ENCODE measurements at regions of chr3 and their contacts with region 1.

Region 1: DNA sequence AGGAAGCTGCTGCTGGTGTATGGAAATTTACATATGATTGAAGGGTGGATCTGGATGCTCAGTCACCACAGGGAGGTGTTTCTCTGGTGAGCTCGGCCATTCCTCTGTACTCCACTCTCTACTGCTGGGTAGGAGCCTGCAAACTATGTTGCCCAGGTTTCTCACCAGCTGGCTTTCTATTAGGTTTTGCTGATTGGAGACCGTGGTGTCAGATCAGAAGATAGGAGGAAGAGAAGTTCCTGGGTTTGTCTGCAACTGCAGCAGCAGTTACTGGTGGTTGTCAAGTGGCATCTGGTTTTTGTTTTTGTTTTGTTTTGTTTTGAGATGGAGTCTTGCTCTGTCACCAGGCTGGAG is 61.7 kb downstream of the TAMM41 start:
- DNase-seq: no peak
- H3K4me3 ChIP-seq: no peak overlapping the region
- H3K27ac ChIP-seq: no peak overlapping the region
- H3K4me1 ChIP-seq: no peaks in the 10 kb centered on the region
- H3K27me3 ChIP-seq: no peaks in the 10 kb centered on the region
- CTCF ChIP-seq: no peak

Region 2: GRCh38 chr3:11764931-11765363 is 20.1 kb before region 1 on chr3:
- CTCF ChIA-PET with region 1: interaction called, 10 read pairs
- POLR2A ChIA-PET with region 1: interaction called, 4 read pairs
- intact Hi-C with region 1: no loop called
- DNase-seq: peak; percentile 58 to 82
- H3K4me3 ChIP-seq: peak overlapping the region; percentile 38; the same call in 1 of the 2 replicates
- H3K27ac ChIP-seq: peak overlapping the region; percentile 81
- H3K4me1 ChIP-seq: peaks cover 28% of the 10 kb centered on the region
- H3K27me3 ChIP-seq: no peaks in the 10 kb centered on the region
- CTCF ChIP-seq: no peak

Measured in PC-9 (cell line).